ENCODE measurements at regions of chr14 and their contacts with region 1.

Region 1: GRCh38 chr14:24418492-24418873 is 11.0 kb downstream of the CBLN3 start:
- DNase-seq: no peak
- ATAC-seq: no peak
- H3K4me3 ChIP-seq: no peak overlapping the region
- H3K4me3 Mint-ChIP-seq: no peak overlapping the region
- H3K27ac ChIP-seq: no peak overlapping the region
- H3K27ac Mint-ChIP-seq: no peak overlapping the region
- H3K4me1 ChIP-seq: peaks cover 13% of the 10 kb centered on the region
- H3K4me1 Mint-ChIP-seq: no peaks in the 10 kb centered on the region
- H3K27me3 ChIP-seq: no peaks in the 10 kb centered on the region
- H3K27me3 Mint-ChIP-seq: peaks cover 5% of the 10 kb centered on the region
- CTCF ChIP-seq: no peak

Region 2: GRCh38 chr14:24351517-24351916 is 67.0 kb before region 1 on chr14:
- CTCF ChIA-PET with region 1: no interaction called
- POLR2A ChIA-PET with region 1: no interaction called
- intact Hi-C with region 1: no loop called
- DNase-seq: no peak
- ATAC-seq: no peak
- H3K4me3 ChIP-seq: no peak overlapping the region
- H3K4me3 Mint-ChIP-seq: no peak overlapping the region
- H3K27ac ChIP-seq: no peak overlapping the region
- H3K27ac Mint-ChIP-seq: no peak overlapping the region
- H3K4me1 ChIP-seq: no peaks in the 10 kb centered on the region
- H3K4me1 Mint-ChIP-seq: no peaks in the 10 kb centered on the region
- H3K27me3 ChIP-seq: peaks cover 18 to 29% of the 10 kb centered on the region in 2 experiments
- H3K27me3 Mint-ChIP-seq: peaks cover 66% of the 10 kb centered on the region
- CTCF ChIP-seq: no peak

Region 3: GRCh38 chr14:24381363-24382063 is 37.0 kb before region 1 on chr14:
- CTCF ChIA-PET with region 1: no interaction called
- POLR2A ChIA-PET with region 1: no interaction called
- intact Hi-C with region 1: loop called in 1 of 2 experiments (anchors 5 kb)
- DNase-seq: no peak
- ATAC-seq: no peak
- H3K4me3 ChIP-seq: no peak overlapping the region
- H3K4me3 Mint-ChIP-seq: no peak overlapping the region
- H3K27ac ChIP-seq: no peak overlapping the region
- H3K27ac Mint-ChIP-seq: no peak overlapping the region
- H3K4me1 ChIP-seq: no peaks in the 10 kb centered on the region
- H3K4me1 Mint-ChIP-seq: no peaks in the 10 kb centered on the region
- H3K27me3 ChIP-seq: no peaks in the 10 kb centered on the region
- H3K27me3 Mint-ChIP-seq: peaks cover 4% of the 10 kb centered on the region
- CTCF ChIP-seq: no peak

Region 4: GRCh38 chr14:24398653-24399446 is 19.6 kb before region 1 on chr14 and contains the start of gene NYNRIN:
- CTCF ChIA-PET with region 1: no interaction called
- POLR2A ChIA-PET with region 1: no interaction called
- intact Hi-C with region 1: no loop called
- DNase-seq: peak in 13 of 14 experiments; percentile 3 to 55 (median 25)
- ATAC-seq: peak; percentile 86
- H3K4me3 ChIP-seq: peak within 1 kb of the TSS; percentile 50
- H3K4me3 Mint-ChIP-seq: peak within 1 kb of the TSS; percentile 84
- H3K27ac ChIP-seq: no peak within 1 kb of the TSS
- H3K27ac Mint-ChIP-seq: no peak within 1 kb of the TSS
- H3K4me1 ChIP-seq: peaks cover 8% of the 10 kb centered on the region
- H3K4me1 Mint-ChIP-seq: peaks cover 8% of the 10 kb centered on the region
- H3K27me3 ChIP-seq: peaks cover 0 to 10% of the 10 kb centered on the region in 2 experiments
- H3K27me3 Mint-ChIP-seq: peaks cover 3% of the 10 kb centered on the region
- CTCF ChIP-seq: no peak
- total RNA-seq, gene NYNRIN: 0.08 to 0.25 TPM